ENCODE measurements at regions of chr12 and their contacts with region 1.

Region 1: DNA sequence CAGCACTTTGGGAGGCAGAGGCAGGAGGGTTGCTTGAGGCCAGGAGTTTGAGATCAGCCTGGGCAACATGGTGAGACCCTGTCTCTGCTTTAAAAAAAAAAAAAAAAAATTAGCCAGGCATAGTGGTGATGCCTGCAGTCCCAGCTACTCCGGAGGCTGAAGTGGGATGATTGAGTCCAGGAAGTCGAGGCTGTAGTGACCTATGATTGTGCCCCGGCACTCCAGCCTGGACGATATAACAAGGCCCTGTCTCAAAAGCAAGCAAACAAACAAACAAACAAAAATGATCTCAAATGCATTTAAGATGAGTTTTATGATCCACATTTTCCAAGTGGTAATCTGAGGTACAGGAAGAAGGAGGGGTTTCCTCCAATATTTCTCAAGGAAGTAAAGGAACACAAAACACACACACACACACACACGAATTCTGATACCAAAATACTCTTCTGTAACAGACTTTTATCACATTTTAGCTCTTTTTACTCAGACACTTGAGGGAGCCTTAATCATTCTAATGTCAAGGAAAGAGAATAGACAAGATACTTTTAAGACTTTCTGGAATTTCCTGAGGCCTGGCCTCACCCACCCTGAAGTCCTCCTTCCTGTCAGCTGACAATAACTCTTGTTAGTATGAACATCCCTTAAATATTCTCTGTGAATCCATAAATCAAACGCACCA is 44.4 kb upstream of the CERS5 start:
- DNase-seq: peak in 1 of 35 experiments; percentile 51
- ATAC-seq: peak; percentile 33 to 71 (median 52)
- H3K4me3 ChIP-seq: peak overlapping the region in 1 of 2 donors; percentile 38
- H3K4me3 Mint-ChIP-seq: peak overlapping the region; percentile 41 to 71 (median 53)
- H3K27ac ChIP-seq: peak overlapping the region; percentile 81
- H3K27ac Mint-ChIP-seq: peak overlapping the region; percentile 97 to 99
- H3K4me1 ChIP-seq: peaks cover 25 to 37% of the 10 kb centered on the region in 2 experiments
- H3K4me1 Mint-ChIP-seq: peaks cover 40 to 51% (median 47%) of the 10 kb centered on the region in 3 donors
- H3K27me3 ChIP-seq: no peaks in the 10 kb centered on the region
- H3K27me3 Mint-ChIP-seq: no peaks in the 10 kb centered on the region

Region 2: GRCh38 chr12:50222275-50222795 is 10.8 kb after region 1 on chr12:
- CTCF ChIA-PET with region 1: interaction called in 1 of 2 experiments, 21 read pairs
- POLR2A ChIA-PET with region 1: interaction called, 4 read pairs
- DNase-seq: peak in 7 of 35 experiments; percentile 3 to 62 (median 15)
- ATAC-seq: peak; percentile 32 to 60 (median 42)
- H3K4me3 ChIP-seq: peak overlapping the region; percentile 70 to 73
- H3K4me3 Mint-ChIP-seq: no peak overlapping the region
- H3K27ac ChIP-seq: peak overlapping the region; percentile 80
- H3K27ac Mint-ChIP-seq: no peak overlapping the region
- H3K4me1 ChIP-seq: peaks cover 14 to 35% of the 10 kb centered on the region in 2 experiments
- H3K4me1 Mint-ChIP-seq: peaks cover 32 to 40% (median 33%) of the 10 kb centered on the region in 3 donors
- H3K27me3 ChIP-seq: no peaks in the 10 kb centered on the region
- H3K27me3 Mint-ChIP-seq: no peaks in the 10 kb centered on the region

Region 3: GRCh38 chr12:51482929-51483697 is 1271.6 kb after region 1 on chr12:
- CTCF ChIA-PET with region 1: no interaction called
- POLR2A ChIA-PET with region 1: interaction called in 1 of 2 experiments, 11 read pairs
- DNase-seq: peak in 31 of 35 experiments; percentile 2 to 48 (median 13)
- ATAC-seq: peak; percentile 57 to 76 (median 73)
- H3K4me3 ChIP-seq: no peak overlapping the region
- H3K4me3 Mint-ChIP-seq: peak overlapping the region; percentile 57 to 63 (median 60)
- H3K27ac ChIP-seq: peak overlapping the region; percentile 70
- H3K27ac Mint-ChIP-seq: peak overlapping the region; percentile 92 to 93
- H3K4me1 ChIP-seq: peaks cover 29% of the 10 kb centered on the region in 2 experiments
- H3K4me1 Mint-ChIP-seq: peaks cover 40 to 43% (median 42%) of the 10 kb centered on the region in 3 donors
- H3K27me3 ChIP-seq: no peaks in the 10 kb centered on the region
- H3K27me3 Mint-ChIP-seq: no peaks in the 10 kb centered on the region

Measured in T-cell (primary cell).